Activated naive CD4-positive, alpha-beta T cell treated with anti-CD3 and anti-CD28 coated beads for 36 hours (primary cell): ENCODE measurements at regions of chr12 and their contacts with region 1.

Region 1: GRCh38 chr12:109110988-109111495 is 5.3 kb upstream of the ACACB start:
- DNase-seq: peak; percentile 50
- H3K4me3 Mint-ChIP-seq: peak overlapping the region; percentile 59
- H3K27ac Mint-ChIP-seq: peak overlapping the region; percentile 36
- H3K4me1 Mint-ChIP-seq: peaks cover 29% of the 10 kb centered on the region
- H3K27me3 Mint-ChIP-seq: no peaks in the 10 kb centered on the region

Region 2: GRCh38 chr12:109098183-109099050 is 12.6 kb before region 1 on chr12:
- CTCF ChIA-PET with region 1: interaction called, 21 read pairs
- intact Hi-C with region 1: no loop called
- DNase-seq: peak; percentile 38
- H3K4me3 Mint-ChIP-seq: peak overlapping the region; percentile 76
- H3K27ac Mint-ChIP-seq: peak overlapping the region; percentile 36
- H3K4me1 Mint-ChIP-seq: peaks cover 33% of the 10 kb centered on the region
- H3K27me3 Mint-ChIP-seq: no peaks in the 10 kb centered on the region

Region 3: GRCh38 chr12:109385339-109386067 is 274.5 kb after region 1 on chr12:
- CTCF ChIA-PET with region 1: interaction called, 7 read pairs
- intact Hi-C with region 1: loop called (anchors 1 kb)
- DNase-seq: peak; percentile 9
- H3K4me3 Mint-ChIP-seq: no peak overlapping the region
- H3K27ac Mint-ChIP-seq: no peak overlapping the region
- H3K4me1 Mint-ChIP-seq: no peaks in the 10 kb centered on the region
- H3K27me3 Mint-ChIP-seq: peaks cover 8% of the 10 kb centered on the region

Region 4: DNA sequence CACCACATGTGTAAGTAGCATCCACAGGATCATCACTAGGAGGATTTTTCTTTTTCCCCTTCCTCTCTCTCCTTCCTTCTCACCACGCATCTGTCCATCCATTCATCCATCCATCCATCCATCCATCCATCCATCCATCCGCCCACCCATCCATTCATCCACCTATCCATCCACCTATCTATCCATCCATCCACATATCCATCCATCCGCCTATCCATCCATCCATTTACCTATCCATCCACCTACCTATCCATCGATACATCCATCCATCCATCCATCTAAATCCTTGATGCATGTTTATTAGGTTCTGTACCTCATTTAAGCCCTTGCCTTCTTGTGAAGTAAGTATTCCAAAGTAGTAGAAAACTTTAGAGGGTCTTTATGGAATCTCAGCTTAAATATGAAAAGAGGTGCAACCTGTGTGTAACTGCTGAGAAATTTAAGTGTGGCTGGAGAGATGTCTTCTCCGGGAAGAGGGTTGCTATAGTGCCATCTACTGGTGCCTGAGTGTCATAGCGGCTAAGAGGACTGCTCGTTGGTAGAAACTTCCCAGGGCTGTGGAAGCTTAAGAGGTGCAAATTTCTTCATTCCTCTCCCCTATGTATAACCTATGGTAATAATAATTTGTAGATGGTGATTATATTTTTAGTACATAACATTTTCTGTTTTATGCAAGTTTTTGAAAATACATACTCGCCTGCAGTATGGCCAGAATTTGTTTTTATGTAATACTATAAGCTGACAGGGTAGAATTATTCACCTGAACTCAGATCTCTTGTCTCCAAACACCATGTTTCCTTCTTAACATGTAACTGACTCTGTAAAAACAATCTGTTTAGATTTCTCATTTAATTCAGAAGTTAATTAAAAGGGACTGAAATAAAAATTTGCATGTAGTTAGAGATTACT is 282.6 kb after region 1 on chr12:
- CTCF ChIA-PET with region 1: interaction called, 9 read pairs
- intact Hi-C with region 1: loop called (anchors 1 kb)
- DNase-seq: peak; percentile 60
- H3K4me3 Mint-ChIP-seq: no peak overlapping the region
- H3K27ac Mint-ChIP-seq: no peak overlapping the region
- H3K4me1 Mint-ChIP-seq: peaks cover 2% of the 10 kb centered on the region
- H3K27me3 Mint-ChIP-seq: peaks cover 26% of the 10 kb centered on the region

Region 5: DNA sequence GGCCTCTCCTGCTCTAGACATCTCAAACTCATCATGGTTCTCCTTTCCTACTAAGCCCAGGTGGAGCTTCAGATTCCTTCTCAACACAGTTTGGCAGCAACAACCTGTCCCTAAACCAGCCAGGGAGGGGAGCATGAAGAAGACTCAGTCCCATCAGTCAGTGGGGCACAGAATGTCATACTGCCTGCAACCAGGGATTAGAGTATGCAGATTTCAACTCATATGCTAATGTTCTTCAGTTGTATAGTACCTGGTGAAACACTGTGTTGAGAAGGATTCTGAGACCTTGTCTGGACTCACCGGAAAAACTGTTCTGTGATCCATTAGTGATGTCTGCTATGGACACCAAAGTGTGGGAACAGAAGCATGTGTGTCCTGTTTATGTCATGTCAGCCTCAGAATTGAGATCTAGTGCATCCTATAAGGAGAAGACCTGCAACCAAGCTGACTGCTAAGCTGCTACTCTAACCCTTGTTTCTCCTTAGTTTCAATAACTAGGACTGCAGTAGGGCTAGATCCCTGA is 678.5 kb after region 1 on chr12:
- CTCF ChIA-PET with region 1: no interaction called
- intact Hi-C with region 1: no loop called
- DNase-seq: no peak
- H3K4me3 Mint-ChIP-seq: no peak overlapping the region
- H3K27ac Mint-ChIP-seq: no peak overlapping the region
- H3K4me1 Mint-ChIP-seq: no peaks in the 10 kb centered on the region
- H3K27me3 Mint-ChIP-seq: peaks cover 8% of the 10 kb centered on the region